Ascending aorta (tissue), 2 donors: ENCODE measurements at regions of chrX and their contacts with region 1.

Region 1: GRCh38 chrX:3697701-3698279 is 15.7 kb downstream of the PRKX start:
- DNase-seq: peak in 1 of 2 donors; percentile 77
- H3K4me3 ChIP-seq: no peak overlapping the region
- H3K27ac ChIP-seq: no peak overlapping the region
- H3K4me1 ChIP-seq: peaks cover 0 to 5% of the 10 kb centered on the region in 2 donors
- H3K27me3 ChIP-seq: no peaks in the 10 kb centered on the region
- CTCF ChIP-seq: no peak

Region 2: GRCh38 chrX:2928191-2928763 is 769.5 kb before region 1 on chrX:
- intact Hi-C with region 1: loop called (anchors 5 kb)
- DNase-seq: peak in 1 of 2 donors; percentile 24
- H3K4me3 ChIP-seq: peak overlapping the region; percentile 83 to 92
- H3K27ac ChIP-seq: peak overlapping the region; percentile 97 to 99
- H3K4me1 ChIP-seq: no peaks in the 10 kb centered on the region
- H3K27me3 ChIP-seq: no peaks in the 10 kb centered on the region
- CTCF ChIP-seq: no peak

Region 3: DNA sequence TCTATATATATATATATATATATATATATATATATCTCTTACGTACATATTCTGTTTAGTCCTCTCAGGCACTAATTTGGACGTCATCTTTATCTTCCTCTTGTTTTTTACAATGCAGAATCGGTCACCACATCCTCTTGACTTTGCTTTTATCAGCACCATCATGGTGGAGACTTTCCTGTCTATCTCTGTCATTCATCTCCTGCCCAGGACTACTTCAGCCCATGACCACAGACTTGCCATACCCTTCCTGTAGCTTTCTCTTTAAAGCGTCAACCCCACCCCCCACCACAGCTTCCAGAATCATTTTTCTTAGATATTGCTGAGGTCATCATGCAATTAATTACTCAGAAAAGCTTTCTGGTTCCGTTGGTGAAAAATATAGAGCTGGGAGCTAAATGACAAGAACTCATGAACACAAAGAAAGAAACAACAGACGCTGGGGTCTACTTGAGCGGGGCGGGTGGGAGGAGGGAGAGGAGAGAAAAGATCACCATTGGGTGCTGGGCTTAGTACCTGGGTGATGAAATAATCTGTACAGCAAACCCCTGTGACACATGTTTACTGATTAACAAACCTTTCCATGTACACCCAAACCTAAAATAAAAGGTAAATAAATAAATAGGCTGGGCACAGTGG is 46.1 kb after region 1 on chrX:
- intact Hi-C with region 1: no loop called
- DNase-seq: no peak
- H3K4me3 ChIP-seq: no peak overlapping the region
- H3K27ac ChIP-seq: no peak overlapping the region
- H3K4me1 ChIP-seq: no peaks in the 10 kb centered on the region
- H3K27me3 ChIP-seq: no peaks in the 10 kb centered on the region
- CTCF ChIP-seq: no peak